Right ventricle myocardium inferior (tissue), 1 donor: ENCODE measurements at regions of chrX and their contacts with region 1.

Region 1: GRCh38 chrX:69538321-69538876 is 34.3 kb downstream of the NALF2 start:
- DNase-seq: peak; percentile 86
- ATAC-seq: peak; percentile 97

Region 2: DNA sequence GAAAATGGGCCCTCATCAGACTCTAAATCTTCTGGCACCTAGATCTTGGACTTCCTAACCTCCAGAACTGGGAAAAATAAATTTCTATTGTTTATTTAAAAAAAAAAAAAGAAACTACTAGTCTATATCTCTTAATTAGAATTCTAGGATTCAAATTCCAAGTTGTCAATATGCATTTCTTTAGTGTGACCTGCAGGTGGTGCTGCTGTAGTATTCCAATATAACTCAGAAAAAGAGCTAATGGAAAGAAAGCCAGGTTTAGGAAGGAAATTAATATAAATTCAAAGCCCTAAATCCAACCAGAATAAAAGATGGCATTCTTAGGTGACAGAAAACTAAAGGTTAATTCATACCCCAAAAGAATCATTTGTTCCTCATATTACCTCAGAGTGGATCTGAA is 114.2 kb before region 1 on chrX:
- intact Hi-C with region 1: loop called (anchors 10 kb)
- DNase-seq: no peak
- ATAC-seq: no peak

Region 3: DNA sequence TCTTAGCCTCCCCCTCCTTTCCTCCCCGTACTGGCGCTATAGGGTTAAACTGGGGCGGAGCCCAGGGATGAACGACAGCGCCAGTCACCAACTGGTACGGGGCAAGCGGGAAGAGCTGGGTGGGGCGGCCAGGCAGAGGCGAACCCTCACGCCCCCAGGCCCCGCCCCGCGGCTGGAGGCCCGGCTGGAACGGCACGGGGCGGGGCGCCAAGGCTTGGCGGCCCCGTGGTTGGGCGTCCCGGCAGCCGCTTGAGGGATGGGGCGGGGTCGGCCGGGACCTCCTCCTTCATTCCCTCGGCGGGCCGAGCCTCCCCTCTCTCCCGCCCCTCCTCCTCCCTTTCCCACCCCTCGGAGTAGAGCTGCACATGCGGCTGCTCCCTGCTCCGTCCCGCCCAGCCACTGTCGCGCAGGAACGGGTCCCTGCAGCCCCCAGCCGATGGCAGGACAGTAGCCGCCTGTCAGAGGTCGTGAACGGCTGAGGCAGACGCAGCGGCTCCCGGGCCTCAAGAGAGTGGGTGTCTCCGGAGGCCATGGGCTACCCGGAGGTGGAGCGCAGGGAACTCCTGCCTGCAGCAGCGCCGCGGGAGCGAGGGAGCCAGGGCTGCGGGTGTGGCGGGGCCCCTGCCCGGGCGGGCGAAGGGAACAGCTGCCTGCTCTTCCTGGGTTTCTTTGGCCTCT is 77.5 kb after region 1 on chrX and contains the start of gene EDA:
- intact Hi-C with region 1: loop called (anchors 2 kb)
- DNase-seq: peak; percentile 86
- ATAC-seq: peak; percentile 98
- total RNA-seq, gene EDA: 12.4 TPM

Region 4: GRCh38 chrX:70030301-70030767 is 491.9 kb after region 1 on chrX:
- intact Hi-C with region 1: loop called (anchors 1 kb)
- DNase-seq: no peak
- ATAC-seq: peak; percentile 81

Region 5: GRCh38 chrX:70096052-70096451 is 557.7 kb after region 1 on chrX:
- intact Hi-C with region 1: loop called (anchors 5 kb)
- DNase-seq: no peak
- ATAC-seq: no peak